ENCODE measurements at regions of chr11 and their contacts with region 1.

Region 1: GRCh38 chr11:12043959-12044819 is 35.8 kb upstream of the DKK3 start:
- DNase-seq: peak; percentile 80 to 91
- ATAC-seq: peak; percentile 88 to 91
- H3K4me3 ChIP-seq: no peak overlapping the region
- H3K27ac ChIP-seq: peak overlapping the region; percentile 85 to 86
- H3K4me1 ChIP-seq: peaks cover 44% of the 10 kb centered on the region
- CTCF ChIP-seq: peak; percentile 97
- EP300 ChIP-seq: peak; percentile 18 to 53; a peak in 2 of 5 replicates
- POLR2A ChIP-seq: no peak
- RAD21 ChIP-seq: peak; percentile 99

Region 2: GRCh38 chr11:11841723-11842420 is 202.3 kb before region 1 on chr11 and contains the start of gene USP47:
- CTCF ChIA-PET with region 1: interaction called, 10 read pairs
- POLR2A ChIA-PET with region 1: interaction called, 3 read pairs
- DNase-seq: peak; percentile 77 to 90
- ATAC-seq: peak; percentile 82 to 87
- H3K4me3 ChIP-seq: peak within 1 kb of the TSS; percentile 90
- H3K27ac ChIP-seq: peak within 1 kb of the TSS; percentile 91 to 96
- H3K4me1 ChIP-seq: peaks cover 29% of the 10 kb centered on the region
- CTCF ChIP-seq: peak; percentile 37; the same call in 2 of the 3 replicates
- EP300 ChIP-seq: no peak
- POLR2A ChIP-seq: peak; percentile 97
- RAD21 ChIP-seq: no peak
- polyA plus RNA-seq, gene USP47: 31.3 and 32.8 TPM in 2 replicates

Region 3: GRCh38 chr11:11946180-11946579 is 98.0 kb before region 1 on chr11:
- CTCF ChIA-PET with region 1: interaction called, 11 read pairs
- POLR2A ChIA-PET with region 1: no interaction called
- DNase-seq: no peak
- ATAC-seq: no peak; a peak in 1 of 6 replicates
- H3K4me3 ChIP-seq: no peak overlapping the region
- H3K27ac ChIP-seq: no peak overlapping the region
- H3K4me1 ChIP-seq: peaks cover 40% of the 10 kb centered on the region
- CTCF ChIP-seq: no peak
- EP300 ChIP-seq: no peak
- POLR2A ChIP-seq: no peak
- RAD21 ChIP-seq: no peak

Region 4: GRCh38 chr11:12060385-12060985 is 16.3 kb after region 1 on chr11:
- CTCF ChIA-PET with region 1: interaction called, 53 read pairs
- POLR2A ChIA-PET with region 1: no interaction called
- DNase-seq: no peak
- ATAC-seq: no peak; a peak in 1 of 6 replicates
- H3K4me3 ChIP-seq: no peak overlapping the region
- H3K27ac ChIP-seq: peak overlapping the region; percentile 56 to 78
- H3K4me1 ChIP-seq: peaks cover 17% of the 10 kb centered on the region
- CTCF ChIP-seq: no peak
- EP300 ChIP-seq: no peak
- POLR2A ChIP-seq: no peak
- RAD21 ChIP-seq: no peak

Region 5: GRCh38 chr11:12167098-12168000 is 123.2 kb after region 1 on chr11:
- CTCF ChIA-PET with region 1: interaction called, 22 read pairs
- POLR2A ChIA-PET with region 1: no interaction called
- DNase-seq: peak; percentile 63 to 92
- ATAC-seq: peak; percentile 83 to 87
- H3K4me3 ChIP-seq: no peak overlapping the region
- H3K27ac ChIP-seq: peak overlapping the region; percentile 83 to 90
- H3K4me1 ChIP-seq: peaks cover 71% of the 10 kb centered on the region
- CTCF ChIP-seq: no peak
- EP300 ChIP-seq: peak; percentile 85 to 91; a peak in 3 of 5 replicates
- POLR2A ChIP-seq: no peak
- RAD21 ChIP-seq: peak in 1 of 2 experiments; percentile 45; a peak in 4 of 5 replicates

Region 6: GRCh38 chr11:12245549-12246016 is 201.4 kb after region 1 on chr11:
- CTCF ChIA-PET with region 1: interaction called, 115 read pairs
- POLR2A ChIA-PET with region 1: no interaction called
- DNase-seq: no peak
- ATAC-seq: peak in 1 of 2 experiments; percentile 17; a peak in 1 of 6 replicates
- H3K4me3 ChIP-seq: no peak overlapping the region
- H3K27ac ChIP-seq: no peak overlapping the region
- H3K4me1 ChIP-seq: peaks cover 10% of the 10 kb centered on the region; the same call in 1 of the 3 replicates
- CTCF ChIP-seq: no peak
- EP300 ChIP-seq: no peak
- POLR2A ChIP-seq: no peak
- RAD21 ChIP-seq: no peak

Measured in A549 (cell line).